Right ventricle myocardium inferior (tissue), 1 donor: ENCODE measurements at regions of chr2 and their contacts with region 1.

Region 1: GRCh38 chr2:136736236-136736635 is 29.1 kb upstream of the THSD7B start:
- DNase-seq: no peak
- ATAC-seq: no peak

Region 2: DNA sequence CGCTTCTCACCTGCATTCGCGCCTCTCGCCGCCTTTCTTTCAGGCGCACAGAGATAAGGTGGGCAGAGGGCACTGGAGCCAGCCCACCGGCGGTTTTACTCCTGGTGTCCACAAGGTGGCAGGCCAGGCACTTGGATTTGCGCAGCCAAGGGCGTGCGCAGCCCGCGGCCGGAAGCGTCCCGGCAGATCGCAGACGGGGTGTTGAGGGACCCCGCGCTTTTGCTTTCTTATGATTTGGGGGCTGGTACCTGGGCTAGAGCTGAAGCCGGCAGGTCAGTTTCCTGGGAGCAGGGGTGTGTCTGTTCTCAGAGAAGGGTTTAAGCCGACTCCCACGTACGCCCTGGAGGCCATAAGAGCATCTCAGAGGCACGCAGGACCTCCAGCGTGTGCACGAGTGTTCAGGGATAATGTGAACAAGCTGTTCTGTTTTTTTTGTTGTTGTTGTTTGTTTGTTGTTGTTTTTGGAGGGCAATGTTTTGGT is 312.7 kb before region 1 on chr2:
- intact Hi-C with region 1: loop called (anchors 2 kb)
- DNase-seq: peak; percentile 83
- ATAC-seq: peak; percentile 91